Activated CD4-positive, alpha-beta T cell treated with anti-CD3 and anti-CD28 coated beads, Interleukin-2, amount 10 ng/mL, durations not matched to agents 7 days and 5 days (primary cell): ENCODE measurements at regions of chr4 and their contacts with region 1.

Region 1: GRCh38 chr4:184514121-184514988 is 40.0 kb upstream of the IRF2 start:
- DNase-seq: peak; percentile 40
- H3K4me3 Mint-ChIP-seq: peak overlapping the region; percentile 35
- H3K27ac Mint-ChIP-seq: peak overlapping the region; percentile 56
- H3K4me1 Mint-ChIP-seq: peaks cover 36% of the 10 kb centered on the region
- H3K27me3 Mint-ChIP-seq: no peaks in the 10 kb centered on the region

Region 2: GRCh38 chr4:184474263-184475095 is 39.9 kb before region 1 on chr4 and contains the start of gene IRF2:
- CTCF ChIA-PET with region 1: interaction called, 5 read pairs
- POLR2A ChIA-PET with region 1: interaction called, 14 read pairs
- DNase-seq: peak; percentile 98
- H3K4me3 Mint-ChIP-seq: peak within 1 kb of the TSS; percentile 99
- H3K27ac Mint-ChIP-seq: peak within 1 kb of the TSS; percentile 98
- H3K4me1 Mint-ChIP-seq: peaks cover 52% of the 10 kb centered on the region
- H3K27me3 Mint-ChIP-seq: no peaks in the 10 kb centered on the region
- total RNA-seq, gene IRF2: 82.1 to 84.3 TPM

Region 3: DNA sequence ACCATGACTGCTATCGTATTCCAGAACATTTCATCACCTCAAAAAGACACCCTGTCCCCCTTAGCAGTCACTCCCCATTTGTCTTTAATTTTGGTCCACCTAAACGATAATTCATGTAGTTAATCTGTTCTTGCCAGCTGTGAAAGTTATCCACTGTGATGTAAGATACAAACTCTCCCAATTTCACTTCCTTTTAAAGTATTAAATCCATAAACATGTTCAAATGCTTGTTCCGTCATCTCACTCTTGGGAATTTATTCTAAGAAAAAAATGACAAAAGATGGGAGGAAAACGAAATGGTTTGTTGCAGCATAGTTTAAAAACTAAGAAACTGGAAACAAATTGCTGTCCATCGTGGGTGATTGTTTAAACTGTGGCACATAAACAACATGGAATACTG is 13.7 kb after region 1 on chr4:
- CTCF ChIA-PET with region 1: interaction called, 44 read pairs
- POLR2A ChIA-PET with region 1: no interaction called
- DNase-seq: no peak
- H3K4me3 Mint-ChIP-seq: no peak overlapping the region
- H3K27ac Mint-ChIP-seq: peak overlapping the region; percentile 31
- H3K4me1 Mint-ChIP-seq: peaks cover 17% of the 10 kb centered on the region
- H3K27me3 Mint-ChIP-seq: no peaks in the 10 kb centered on the region

Region 4: GRCh38 chr4:184538023-184538599 is 23.8 kb after region 1 on chr4:
- CTCF ChIA-PET with region 1: interaction called, 44 read pairs
- POLR2A ChIA-PET with region 1: interaction called, 4 read pairs
- DNase-seq: peak; percentile 71
- H3K4me3 Mint-ChIP-seq: peak overlapping the region; percentile 91
- H3K27ac Mint-ChIP-seq: peak overlapping the region; percentile 99
- H3K4me1 Mint-ChIP-seq: peaks cover 45% of the 10 kb centered on the region
- H3K27me3 Mint-ChIP-seq: no peaks in the 10 kb centered on the region